Right cardiac atrium (tissue), 5 donors: ENCODE measurements at regions of chr22 and their contacts with region 1.

Region 1: DNA sequence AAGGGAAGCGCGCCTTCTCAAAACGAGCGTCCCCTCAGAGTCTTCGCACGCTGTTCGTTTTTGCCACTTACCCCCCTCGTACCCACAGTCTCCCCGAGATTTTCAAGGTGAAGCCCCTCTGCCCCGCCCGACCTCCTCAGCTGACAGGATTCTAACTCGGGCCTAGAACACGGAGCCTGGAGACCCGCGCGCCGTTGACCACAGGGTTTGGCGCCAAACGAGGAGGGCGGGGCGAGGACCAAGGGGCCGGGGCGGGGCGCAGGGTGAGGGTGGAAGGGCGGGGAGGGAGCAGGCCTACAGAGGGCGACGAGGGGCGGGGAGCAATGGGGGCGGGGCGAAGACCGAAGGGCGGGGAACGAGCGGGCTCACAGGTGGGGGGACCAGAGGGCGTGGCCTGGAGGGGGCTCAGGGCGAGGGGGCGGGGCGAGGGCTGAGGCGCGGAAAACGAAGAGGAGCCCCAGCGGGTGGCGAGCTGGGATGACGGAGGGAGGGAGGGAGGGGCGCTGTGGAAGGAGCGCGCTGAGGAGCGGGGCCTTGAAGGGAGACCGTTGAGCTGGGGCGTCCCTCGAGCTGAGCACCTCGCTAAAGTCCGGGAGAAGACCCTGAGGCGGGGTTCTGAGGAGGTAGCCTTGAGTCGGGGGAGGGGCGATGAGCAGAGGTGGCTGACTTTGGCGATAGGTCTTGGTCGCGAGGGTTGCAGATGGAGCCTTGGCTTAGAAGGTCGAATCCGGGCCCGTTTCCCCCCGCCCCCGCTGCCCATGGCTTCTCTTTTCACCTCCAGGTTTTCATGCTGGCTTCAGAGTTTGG is at the start of gene DMC1:
- DNase-seq: peak; percentile 95 to 99 (median 97)
- ATAC-seq: peak; percentile 98
- H3K4me3 ChIP-seq: peak within 1 kb of the TSS; percentile 92
- H3K27ac ChIP-seq: peak within 1 kb of the TSS; percentile 90
- H3K4me1 ChIP-seq: no peaks in the 10 kb centered on the region
- H3K27me3 ChIP-seq: no peaks in the 10 kb centered on the region
- total RNA-seq, gene DMC1: 0.83 to 3.2 (median 1.9) TPM

Region 2: GRCh38 chr22:38051900-38052862 is 518.0 kb before region 1 on chr22:
- intact Hi-C with region 1: loop called in 1 of 4 experiments (anchors 5 kb)
- DNase-seq: peak; percentile 81 to 91 (median 89)
- ATAC-seq: peak; percentile 70 to 71
- H3K4me3 ChIP-seq: no peak overlapping the region
- H3K27ac ChIP-seq: no peak overlapping the region
- H3K4me1 ChIP-seq: peaks cover 5% of the 10 kb centered on the region
- H3K27me3 ChIP-seq: no peaks in the 10 kb centered on the region

Region 3: GRCh38 chr22:38069372-38070249 is 500.6 kb before region 1 on chr22:
- intact Hi-C with region 1: loop called in 1 of 4 experiments (anchors 5 kb)
- DNase-seq: peak; percentile 73 to 93 (median 89)
- ATAC-seq: peak; percentile 63 to 80
- H3K4me3 ChIP-seq: no peak overlapping the region
- H3K27ac ChIP-seq: peak overlapping the region; percentile 88
- H3K4me1 ChIP-seq: peaks cover 10% of the 10 kb centered on the region
- H3K27me3 ChIP-seq: no peaks in the 10 kb centered on the region

Region 4: GRCh38 chr22:38412435-38413084 is 157.6 kb before region 1 on chr22:
- intact Hi-C with region 1: loop called in 2 of 4 experiments (anchors 5 to 10 kb)
- DNase-seq: peak in 2 of 3 donors; percentile 63 to 75
- ATAC-seq: peak; percentile 15 to 47
- H3K4me3 ChIP-seq: peak overlapping the region; percentile 17
- H3K27ac ChIP-seq: peak overlapping the region; percentile 37
- H3K4me1 ChIP-seq: peaks cover 3% of the 10 kb centered on the region
- H3K27me3 ChIP-seq: no peaks in the 10 kb centered on the region

Region 5: DNA sequence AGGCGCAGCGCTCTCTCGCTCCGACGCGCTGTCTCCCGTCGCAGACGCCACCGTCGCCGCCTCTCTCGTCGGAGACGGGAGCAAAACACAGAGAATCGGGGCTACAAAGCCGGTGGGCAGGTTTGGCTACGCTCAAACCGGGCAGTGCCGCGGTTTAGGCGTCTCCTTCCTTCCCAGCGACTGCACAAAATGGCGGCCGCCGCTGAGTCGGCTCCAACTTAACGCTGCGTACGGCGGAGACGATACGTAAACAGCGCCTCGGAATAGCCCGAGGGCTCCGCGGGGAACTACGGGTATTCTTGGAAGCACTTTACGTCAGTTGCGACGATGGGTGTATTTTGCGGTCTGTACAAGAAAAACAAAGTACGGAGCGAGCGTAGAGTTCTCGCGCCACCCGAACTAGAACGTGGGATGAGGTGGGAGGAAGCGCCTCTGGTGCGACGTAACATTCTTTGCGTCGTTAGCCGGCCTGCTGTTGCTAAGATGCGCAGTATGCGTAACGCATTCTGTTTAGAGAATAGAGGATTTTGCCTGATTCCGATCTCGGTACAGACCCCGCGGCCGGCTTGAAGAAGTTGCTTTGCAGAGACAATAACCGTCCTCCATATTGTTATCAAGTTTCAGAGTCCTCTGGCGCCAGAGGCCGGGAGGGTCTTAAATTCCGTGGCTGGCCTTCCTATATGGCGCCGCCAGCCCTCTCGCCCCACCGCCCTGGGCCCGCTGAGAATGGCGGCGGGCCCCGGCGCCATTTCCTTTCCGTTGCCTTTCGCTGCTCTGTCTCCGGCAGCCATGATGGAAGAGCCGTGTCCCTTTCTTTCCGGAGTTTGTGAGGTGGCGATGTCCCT is 63.8 kb before region 1 on chr22 and contains the start of gene DDX17:
- intact Hi-C with region 1: loop called in 2 of 4 experiments (anchors 5 to 10 kb)
- DNase-seq: peak; percentile 93 to 96 (median 96)
- ATAC-seq: peak; percentile 92 to 93
- H3K4me3 ChIP-seq: peak within 1 kb of the TSS; percentile 96
- H3K27ac ChIP-seq: peak within 1 kb of the TSS; percentile 100
- H3K4me1 ChIP-seq: peaks cover 2% of the 10 kb centered on the region
- H3K27me3 ChIP-seq: no peaks in the 10 kb centered on the region
- total RNA-seq, gene DDX17: 216 to 253 (median 238) TPM

Region 6: GRCh38 chr22:38513063-38513462 is 57.1 kb before region 1 on chr22:
- intact Hi-C with region 1: loop called in 2 of 4 experiments (anchors 5 to 10 kb)
- DNase-seq: no peak
- ATAC-seq: peak in 1 of 2 donors; percentile 40
- H3K4me3 ChIP-seq: no peak overlapping the region
- H3K27ac ChIP-seq: no peak overlapping the region
- H3K4me1 ChIP-seq: no peaks in the 10 kb centered on the region
- H3K27me3 ChIP-seq: no peaks in the 10 kb centered on the region